Activated naive CD4-positive, alpha-beta T cell treated with anti-CD3 and anti-CD28 coated beads, Interleukin-2, amount 10 ng/mL, durations not matched to agents 7 days and 5 days (primary cell): ENCODE measurements at regions of chr1 and their contacts with region 1.

Region 1: DNA sequence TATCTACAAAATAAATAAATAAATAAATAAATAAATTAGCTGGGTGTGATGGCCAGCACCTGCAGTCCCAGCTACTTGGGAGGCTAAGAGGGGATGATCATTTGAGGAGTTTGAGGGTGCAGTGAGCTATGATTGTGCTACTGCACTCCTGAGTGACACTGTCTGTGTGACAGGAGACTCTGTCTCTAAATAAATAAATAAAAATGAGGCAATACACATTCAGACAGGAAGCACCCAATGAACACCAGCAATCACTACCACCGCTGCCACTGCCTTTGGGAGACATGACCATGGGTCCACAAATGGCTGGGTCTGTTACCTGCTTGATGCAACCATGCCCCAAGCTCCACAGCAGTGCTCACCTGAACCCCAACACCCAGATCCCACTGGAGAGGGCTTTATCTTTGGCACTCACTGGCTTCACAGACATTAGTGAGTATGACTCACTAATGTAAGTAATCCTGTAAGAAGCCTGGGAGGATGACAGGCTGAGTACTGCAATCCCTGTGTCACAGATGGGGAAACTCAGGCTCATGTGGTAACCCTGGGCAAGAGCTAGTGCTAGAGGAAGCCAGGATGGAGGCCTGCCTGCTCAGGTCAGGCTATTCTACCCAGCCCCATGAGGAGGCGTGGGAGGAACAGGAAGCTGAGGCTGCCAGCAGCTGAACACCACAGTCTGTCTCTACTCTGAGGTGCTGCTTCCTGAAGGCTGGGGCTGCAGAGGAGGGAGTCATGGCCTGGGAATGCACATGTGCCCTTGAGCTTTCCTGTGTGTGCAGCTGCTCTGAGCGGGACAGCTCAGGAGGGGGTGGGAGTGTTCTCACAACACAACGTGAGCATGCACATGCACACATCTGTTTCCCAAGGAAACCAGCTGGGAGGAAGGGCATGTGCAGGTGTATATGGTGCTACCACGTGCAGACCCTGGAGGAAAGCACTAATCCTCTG is 43.0 kb downstream of the SLC9A1 start:
- DNase-seq: peak; percentile 82
- H3K4me3 Mint-ChIP-seq: no peak overlapping the region
- H3K27ac Mint-ChIP-seq: peak overlapping the region; percentile 92
- H3K4me1 Mint-ChIP-seq: peaks cover 60% of the 10 kb centered on the region
- H3K27me3 Mint-ChIP-seq: no peaks in the 10 kb centered on the region

Region 2: DNA sequence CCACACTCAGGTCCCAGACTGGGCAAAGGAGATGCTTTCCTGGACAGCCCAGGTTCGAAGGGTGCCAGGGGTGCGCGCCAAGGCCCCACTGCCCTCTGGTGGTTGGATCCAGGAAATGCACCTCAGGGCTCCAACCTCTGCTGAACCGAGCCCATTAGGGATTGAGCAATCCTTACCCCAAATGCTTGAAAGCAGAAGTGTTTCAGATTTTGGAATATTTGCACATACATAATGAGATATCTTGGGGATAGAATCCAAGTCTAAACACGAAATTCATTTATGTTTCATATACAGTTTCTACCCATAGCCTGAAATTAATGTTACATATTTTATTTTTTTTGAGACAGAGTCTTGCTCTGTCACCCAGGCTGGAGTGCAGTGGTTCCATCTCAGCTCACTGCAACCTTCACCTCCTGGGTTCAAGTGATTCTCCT is 14.4 kb before region 1 on chr1:
- CTCF ChIA-PET with region 1: interaction called, 10 read pairs
- DNase-seq: peak; percentile 82
- H3K4me3 Mint-ChIP-seq: no peak overlapping the region
- H3K27ac Mint-ChIP-seq: peak overlapping the region; percentile 6
- H3K4me1 Mint-ChIP-seq: peaks cover 5% of the 10 kb centered on the region
- H3K27me3 Mint-ChIP-seq: peaks cover 4% of the 10 kb centered on the region

Region 3: DNA sequence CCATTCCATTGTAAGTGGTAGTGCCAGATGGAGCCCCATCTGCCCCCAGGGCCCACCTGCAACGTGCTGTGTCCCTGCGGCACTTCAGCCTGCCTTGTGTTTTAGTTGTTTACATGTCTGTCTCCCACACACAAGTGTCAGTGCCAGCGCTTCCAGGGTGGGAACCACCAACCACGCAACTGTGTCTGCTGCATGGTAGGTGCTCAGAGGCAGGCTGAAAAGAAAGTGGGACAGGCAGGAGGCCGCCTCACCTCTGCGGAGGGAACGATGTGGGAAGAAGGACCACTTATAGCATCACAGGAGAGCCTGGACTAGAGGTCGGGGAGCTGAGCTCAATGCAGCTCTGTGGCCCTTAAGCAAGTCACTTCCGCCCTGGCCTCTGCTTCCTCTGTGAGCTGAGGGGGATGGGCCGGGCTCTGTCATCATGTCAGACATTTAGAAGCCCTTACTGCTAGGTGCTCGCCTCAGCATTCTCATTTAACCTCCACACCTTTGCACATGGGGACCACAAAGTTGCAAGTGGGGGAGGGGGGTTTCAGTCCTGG is 25.2 kb after region 1 on chr1:
- CTCF ChIA-PET with region 1: interaction called, 21 read pairs
- DNase-seq: peak; percentile 91
- H3K4me3 Mint-ChIP-seq: peak overlapping the region; percentile 74
- H3K27ac Mint-ChIP-seq: peak overlapping the region; percentile 99
- H3K4me1 Mint-ChIP-seq: peaks cover 46% of the 10 kb centered on the region
- H3K27me3 Mint-ChIP-seq: no peaks in the 10 kb centered on the region

Region 4: GRCh38 chr1:27192039-27192529 is 80.2 kb after region 1 on chr1:
- CTCF ChIA-PET with region 1: interaction called, 24 read pairs
- DNase-seq: no peak
- H3K4me3 Mint-ChIP-seq: no peak overlapping the region
- H3K27ac Mint-ChIP-seq: no peak overlapping the region
- H3K4me1 Mint-ChIP-seq: no peaks in the 10 kb centered on the region
- H3K27me3 Mint-ChIP-seq: peaks cover 21% of the 10 kb centered on the region